ENCODE measurements at regions of chr4 and their contacts with region 1.

Region 1: GRCh38 chr4:153750197-153750817 is 9.5 kb downstream of the RNF175 start:
- DNase-seq: no peak
- ATAC-seq: peak; percentile 57
- H3K4me3 Mint-ChIP-seq: no peak overlapping the region
- H3K27ac Mint-ChIP-seq: no peak overlapping the region
- H3K4me1 Mint-ChIP-seq: no peaks in the 10 kb centered on the region
- H3K27me3 Mint-ChIP-seq: peaks cover 13% of the 10 kb centered on the region
- CTCF ChIP-seq: peak; percentile 19

Region 2: GRCh38 chr4:153634738-153635353 is 115.5 kb before region 1 on chr4:
- CTCF ChIA-PET with region 1: interaction called, 31 read pairs
- POLR2A ChIA-PET with region 1: no interaction called
- intact Hi-C with region 1: loop called (anchors 1 kb)
- DNase-seq: no peak
- ATAC-seq: peak; percentile 46
- H3K4me3 Mint-ChIP-seq: no peak overlapping the region
- H3K27ac Mint-ChIP-seq: no peak overlapping the region
- H3K4me1 Mint-ChIP-seq: peaks cover 6% of the 10 kb centered on the region
- H3K27me3 Mint-ChIP-seq: no peaks in the 10 kb centered on the region
- CTCF ChIP-seq: peak; percentile 23

Region 3: DNA sequence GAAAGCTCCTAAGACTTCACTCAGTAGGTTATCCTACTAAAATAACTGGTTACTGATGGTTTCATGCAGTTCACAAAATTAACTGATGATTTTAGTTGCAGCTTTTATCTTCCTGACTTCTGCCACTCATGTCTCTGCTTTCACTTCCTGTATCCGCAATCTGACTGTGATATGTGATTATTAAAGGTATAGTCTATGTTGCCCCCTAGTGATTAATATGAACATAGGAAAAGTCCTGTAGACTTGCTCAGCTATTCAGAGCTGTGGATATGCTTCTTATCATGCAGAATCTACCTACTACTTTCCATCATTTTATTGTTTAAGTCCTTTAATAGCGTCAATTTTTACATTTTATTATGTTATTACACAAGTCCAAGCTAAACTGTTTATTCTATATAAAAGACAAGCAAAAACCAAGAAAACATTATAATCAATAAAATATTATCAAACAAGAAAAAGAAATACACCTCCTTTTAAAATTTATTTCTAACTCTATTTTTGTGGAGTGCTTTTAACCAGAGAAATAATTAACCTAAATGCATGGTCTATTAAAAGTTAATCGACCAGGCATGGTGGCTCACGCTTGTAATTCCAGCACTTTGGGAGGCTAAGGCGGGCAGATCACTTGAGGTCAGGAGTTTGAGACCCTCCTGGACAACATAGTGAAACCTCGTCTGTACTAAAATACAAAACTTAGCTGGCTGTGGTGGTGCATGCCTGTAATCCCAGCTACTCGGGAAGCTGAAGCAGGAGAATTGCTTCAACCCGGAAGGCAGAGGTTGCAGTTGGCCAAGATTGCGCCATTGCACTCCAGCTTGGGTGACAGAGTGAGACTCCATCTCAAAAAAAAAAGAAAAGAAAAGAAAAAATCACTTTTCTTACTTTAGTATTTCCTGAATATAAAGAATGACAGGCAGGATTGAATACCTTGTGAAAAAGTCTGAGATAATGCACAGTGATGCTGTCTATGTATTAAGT is 106.6 kb before region 1 on chr4:
- CTCF ChIA-PET with region 1: interaction called, 36 read pairs
- POLR2A ChIA-PET with region 1: no interaction called
- intact Hi-C with region 1: loop called (anchors 1 kb)
- DNase-seq: no peak
- ATAC-seq: peak; percentile 95
- H3K4me3 Mint-ChIP-seq: no peak overlapping the region
- H3K27ac Mint-ChIP-seq: no peak overlapping the region
- H3K4me1 Mint-ChIP-seq: peaks cover 10% of the 10 kb centered on the region
- H3K27me3 Mint-ChIP-seq: no peaks in the 10 kb centered on the region
- CTCF ChIP-seq: peak; percentile 36